GM10248 (cell line): ENCODE measurements at regions of chr3 and their contacts with region 1.

Region 1: DNA sequence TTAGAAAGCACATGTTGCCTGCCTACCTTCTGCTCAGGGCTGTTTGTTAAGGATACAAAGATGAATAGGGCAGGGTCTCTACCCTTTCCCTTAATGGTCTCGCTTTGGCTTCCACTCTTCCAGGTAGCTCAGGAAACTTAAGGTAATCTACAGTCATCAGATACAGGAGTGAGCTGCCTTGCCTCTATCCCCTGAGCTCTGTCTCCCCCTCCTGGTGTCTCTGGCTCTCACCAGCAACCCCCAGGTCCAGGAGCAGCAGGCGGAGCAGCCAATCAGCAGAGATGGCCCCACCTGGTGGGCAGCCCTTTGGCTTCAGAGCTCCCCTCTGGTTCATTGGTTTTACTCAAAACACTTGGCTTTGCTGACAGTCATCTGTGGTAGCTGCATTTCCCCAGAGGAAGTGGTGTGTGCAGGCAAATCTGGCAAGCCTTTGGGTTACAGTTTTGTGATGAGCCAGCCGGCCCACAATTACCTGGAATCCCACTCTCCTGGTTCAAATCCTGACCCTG is 8.5 kb upstream of the CX3CR1 start:
- DNase-seq: peak; percentile 94
- CTCF ChIP-seq: peak; percentile 95

Region 2: GRCh38 chr3:39107388-39108199 is 180.8 kb before region 1 on chr3 and contains the starts of genes GORASP1 and TTC21A:
- CTCF ChIA-PET with region 1: interaction called, 17 read pairs
- POLR2A ChIA-PET with region 1: no interaction called
- DNase-seq: peak; percentile 88
- CTCF ChIP-seq: no peak

Region 3: GRCh38 chr3:39171860-39172259 is 116.5 kb before region 1 on chr3:
- CTCF ChIA-PET with region 1: interaction called, 16 read pairs
- POLR2A ChIA-PET with region 1: no interaction called
- DNase-seq: no peak
- CTCF ChIP-seq: no peak

Region 4: GRCh38 chr3:39208463-39209055 is 79.8 kb before region 1 on chr3:
- CTCF ChIA-PET with region 1: interaction called, 69 read pairs
- POLR2A ChIA-PET with region 1: interaction called, 3 read pairs
- DNase-seq: no peak
- CTCF ChIP-seq: peak; percentile 74

Region 5: DNA sequence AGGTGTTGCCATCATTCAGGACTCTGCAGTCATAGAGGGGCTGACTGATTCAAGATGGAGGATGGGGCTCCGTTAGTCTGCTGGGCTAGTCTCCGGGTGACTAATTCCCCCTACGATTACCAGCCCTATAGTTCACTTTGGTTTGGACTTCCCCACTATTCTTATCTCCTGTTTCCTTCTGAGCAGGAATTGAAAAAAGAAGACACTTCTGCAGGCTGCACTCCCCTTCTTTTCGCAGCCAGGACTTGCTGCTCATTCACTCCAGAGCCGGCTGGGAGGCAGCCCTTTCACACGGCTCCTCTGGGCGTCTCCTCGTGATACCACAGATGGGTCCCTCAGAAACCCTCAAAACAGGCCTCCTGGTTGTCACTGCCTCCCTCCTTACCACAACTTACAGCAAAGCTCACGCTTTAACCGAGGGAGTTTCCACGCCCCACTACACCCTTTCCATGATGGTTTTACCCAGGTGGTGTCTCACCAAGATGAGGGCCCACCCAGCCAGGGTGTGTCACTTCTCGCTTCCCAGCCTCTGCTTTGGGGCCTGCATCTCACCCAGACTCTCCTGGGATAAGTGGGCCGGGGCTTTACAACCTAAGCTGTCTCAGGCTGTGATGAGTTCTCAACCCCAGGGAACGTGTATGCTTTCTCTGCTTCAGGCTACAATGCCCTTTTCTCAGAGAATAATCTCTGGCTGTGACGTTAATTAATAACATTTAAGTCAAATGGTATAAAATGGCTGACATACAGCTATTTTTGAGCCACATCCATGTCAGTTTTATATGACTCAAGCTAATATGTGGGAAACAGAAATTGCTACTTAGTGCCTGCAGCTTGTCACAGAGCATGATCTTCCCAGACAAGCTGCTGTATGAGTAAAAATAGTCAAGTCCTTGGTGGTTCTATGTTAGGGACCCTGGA is 20.5 kb before region 1 on chr3:
- CTCF ChIA-PET with region 1: interaction called, 250 read pairs
- POLR2A ChIA-PET with region 1: no interaction called
- DNase-seq: no peak
- CTCF ChIP-seq: no peak

Region 6: GRCh38 chr3:39361252-39361927 is 73.0 kb after region 1 on chr3:
- CTCF ChIA-PET with region 1: interaction called, 10 read pairs
- POLR2A ChIA-PET with region 1: no interaction called
- DNase-seq: no peak
- CTCF ChIP-seq: no peak